Right ventricle myocardium inferior (tissue), 1 donor: ENCODE measurements at regions of chr17 and their contacts with region 1.

Region 1: GRCh38 chr17:81484195-81484979 is 28.2 kb downstream of the ACTG1 start:
- DNase-seq: peak; percentile 95
- ATAC-seq: peak; percentile 63

Region 2: GRCh38 chr17:81253358-81254131 is 230.8 kb before region 1 on chr17:
- intact Hi-C with region 1: loop called (anchors 1 kb)
- DNase-seq: peak; percentile 82
- ATAC-seq: peak; percentile 51

Region 3: GRCh38 chr17:81277421-81277820 is 207.0 kb before region 1 on chr17:
- intact Hi-C with region 1: no loop called
- DNase-seq: peak; percentile 74
- ATAC-seq: peak; percentile 67

Region 4: DNA sequence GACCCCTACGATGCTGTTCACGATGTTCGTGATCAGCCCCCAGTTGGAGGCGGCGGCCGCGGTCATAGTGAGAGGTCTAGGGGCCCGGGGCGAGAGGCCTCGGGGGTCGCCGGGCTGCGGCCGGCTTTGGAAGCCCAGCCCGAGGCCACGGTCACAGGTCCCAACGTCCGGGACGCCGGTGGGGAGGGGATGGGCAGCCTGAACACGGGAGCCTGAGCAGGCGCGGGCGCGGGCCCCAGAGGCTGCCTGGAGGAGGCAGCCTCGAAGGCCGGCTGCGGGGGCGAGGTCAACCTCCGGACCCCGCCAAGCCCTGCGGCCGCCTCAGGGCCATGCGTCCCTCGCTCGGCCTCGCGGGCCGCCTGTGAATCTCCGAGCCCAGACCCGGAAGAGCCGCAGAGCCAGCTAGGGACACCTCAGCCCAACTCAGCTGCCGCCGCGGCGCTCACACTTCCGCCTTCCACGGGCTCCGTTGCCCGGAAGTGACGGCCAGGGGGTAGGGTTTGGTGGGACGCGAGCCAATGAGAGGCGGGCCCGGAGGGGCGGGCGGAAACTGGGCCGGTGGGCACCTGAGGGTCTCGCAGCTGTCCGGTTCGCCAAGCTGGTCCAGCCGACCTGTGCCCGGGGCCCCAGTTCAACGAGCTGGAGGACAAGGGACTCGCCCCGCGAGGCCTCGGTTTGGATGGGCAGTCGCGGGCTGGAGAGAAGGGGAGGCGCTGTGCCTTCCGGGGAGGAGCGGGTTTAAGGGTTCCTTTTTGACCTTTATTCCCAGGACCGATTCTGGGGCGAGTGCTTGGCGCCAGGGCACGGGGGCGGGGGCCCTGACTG is 189.3 kb before region 1 on chr17 and contains the start of gene SLC38A10:
- intact Hi-C with region 1: loop called (anchors 5 kb)
- DNase-seq: peak; percentile 97
- ATAC-seq: peak; percentile 91
- total RNA-seq, gene SLC38A10: 44.6 TPM

Region 5: DNA sequence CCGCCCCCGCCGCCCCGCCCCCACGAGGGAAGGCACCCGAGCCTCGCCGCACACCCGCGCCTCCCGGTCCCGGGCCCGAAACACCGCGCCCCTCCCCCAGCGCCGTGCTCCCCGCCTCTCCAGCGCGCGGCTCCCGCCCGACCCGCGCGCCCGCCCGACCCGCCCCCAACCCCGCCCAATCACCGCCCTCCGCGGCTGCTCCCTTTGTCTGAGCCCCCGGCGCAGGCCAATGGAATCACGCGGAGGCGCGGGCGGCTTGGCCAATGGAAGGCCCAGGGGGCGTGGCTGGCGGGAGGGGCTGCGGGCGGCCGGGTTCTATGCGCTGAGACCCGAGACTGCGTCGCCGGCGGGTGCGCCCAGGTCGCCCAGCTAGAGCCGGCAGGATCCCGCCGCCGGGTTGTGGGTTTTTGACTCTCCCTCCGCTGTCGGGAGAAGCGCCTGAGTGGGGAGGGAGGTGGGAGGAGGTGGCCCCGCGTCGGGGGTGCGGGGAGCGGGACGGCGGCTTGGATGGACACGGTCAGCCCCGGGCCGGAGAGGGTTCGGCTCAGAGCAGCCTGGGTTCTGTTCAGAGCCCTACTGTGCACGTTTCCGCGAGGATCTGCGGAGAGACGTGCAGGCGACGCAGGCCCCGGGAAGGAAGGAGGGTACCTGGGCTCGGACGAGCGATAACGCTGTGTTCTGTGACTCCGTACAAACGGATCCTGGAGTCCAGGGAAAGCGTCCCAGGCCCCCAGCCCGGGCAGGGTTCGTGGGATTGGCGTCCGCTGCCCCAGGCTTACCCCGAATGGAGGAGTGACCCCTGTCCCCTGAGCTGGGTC is 138.1 kb before region 1 on chr17:
- intact Hi-C with region 1: loop called (anchors 2 kb)
- DNase-seq: peak; percentile 100
- ATAC-seq: peak; percentile 91

Region 6: DNA sequence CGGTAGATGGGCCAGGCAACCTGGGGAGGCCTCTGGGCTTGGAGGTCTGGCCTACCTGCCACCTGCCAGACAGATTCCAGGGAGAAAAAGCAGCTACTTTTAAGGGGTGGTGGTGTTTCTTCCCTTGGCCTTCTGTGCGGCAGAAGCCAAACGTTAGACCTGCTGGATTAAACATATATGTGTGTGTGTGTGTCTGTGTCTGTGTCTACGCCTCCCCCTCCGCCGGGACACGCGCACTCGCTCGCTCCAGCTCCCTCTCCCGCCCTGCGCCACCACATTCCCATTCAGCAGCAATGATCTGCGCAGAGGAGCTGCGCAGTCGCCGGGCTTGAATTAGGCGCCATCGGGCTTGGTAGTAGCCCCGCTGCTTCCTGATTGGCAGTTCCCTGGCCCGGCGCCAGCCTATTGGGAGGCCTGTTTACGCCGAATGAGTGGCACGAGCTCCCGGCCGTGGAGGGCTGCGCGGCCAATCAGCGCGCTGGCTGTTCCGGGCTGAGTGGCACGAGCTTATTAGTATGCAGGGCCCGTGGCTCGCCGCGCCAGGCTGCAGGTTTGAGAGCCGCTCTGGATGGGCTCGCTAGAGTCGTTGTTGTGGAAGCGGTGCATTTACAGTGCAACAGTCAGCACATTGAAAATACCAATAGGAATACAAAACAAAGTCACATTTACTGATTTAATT is 89.3 kb before region 1 on chr17 and contains the start of gene BAHCC1:
- intact Hi-C with region 1: loop called (anchors 2 kb)
- DNase-seq: peak; percentile 100
- ATAC-seq: peak; percentile 88
- total RNA-seq, gene BAHCC1: 9.9 TPM

Region 7: GRCh38 chr17:81401723-81402529 is 82.5 kb before region 1 on chr17:
- intact Hi-C with region 1: loop called (anchors 2 kb)
- DNase-seq: no peak
- ATAC-seq: no peak